ENCODE measurements at regions of chr14 and their contacts with region 1.

Region 1: DNA sequence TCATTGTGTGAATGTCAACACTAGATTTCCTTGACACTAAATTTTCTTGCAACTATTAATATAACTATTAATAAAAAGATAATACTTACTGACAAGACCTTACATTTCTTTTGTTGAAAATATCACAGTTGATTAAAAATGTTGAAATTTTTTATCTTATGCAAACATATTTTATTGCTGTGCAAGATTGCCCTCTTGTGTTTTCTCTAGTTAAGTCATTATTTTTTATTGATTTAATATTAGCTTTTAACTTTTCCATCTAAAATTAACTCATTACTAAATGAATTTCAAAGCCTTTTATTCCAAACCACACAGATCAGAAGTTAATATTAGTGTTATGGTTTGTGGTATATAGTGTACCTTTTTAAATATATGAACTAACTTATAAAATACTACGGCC is 11.7 kb upstream of the NAA30 start:
- DNase-seq: no peak
- ATAC-seq: no peak
- H3K4me3 ChIP-seq: no peak overlapping the region
- H3K27ac ChIP-seq: no peak overlapping the region
- H3K4me1 ChIP-seq: no peaks in the 10 kb centered on the region
- H3K27me3 ChIP-seq: no peaks in the 10 kb centered on the region
- CTCF ChIP-seq: no peak

Region 2: GRCh38 chr14:57326253-57326652 is 52.4 kb before region 1 on chr14:
- CTCF ChIA-PET with region 1: no interaction called
- POLR2A ChIA-PET with region 1: no interaction called
- in situ Hi-C with region 1: no loop called
- intact Hi-C with region 1: loop called (anchors 10 kb)
- DNase-seq: no peak
- ATAC-seq: no peak
- H3K4me3 ChIP-seq: no peak overlapping the region
- H3K27ac ChIP-seq: no peak overlapping the region
- H3K4me1 ChIP-seq: no peaks in the 10 kb centered on the region
- H3K27me3 ChIP-seq: no peaks in the 10 kb centered on the region; the same call in 1 of the 2 replicates
- CTCF ChIP-seq: no peak

Region 3: GRCh38 chr14:57822081-57822480 is 443.4 kb after region 1 on chr14:
- CTCF ChIA-PET with region 1: no interaction called
- POLR2A ChIA-PET with region 1: no interaction called
- in situ Hi-C with region 1: no loop called
- intact Hi-C with region 1: no loop called
- DNase-seq: no peak
- ATAC-seq: no peak
- H3K4me3 ChIP-seq: no peak overlapping the region
- H3K27ac ChIP-seq: no peak overlapping the region
- H3K4me1 ChIP-seq: no peaks in the 10 kb centered on the region
- H3K27me3 ChIP-seq: no peaks in the 10 kb centered on the region
- CTCF ChIP-seq: no peak